Posterior vena cava (tissue), 2 donors: ENCODE measurements at regions of chr14 and their contacts with region 1.

Region 1: GRCh38 chr14:101767618-101768362 is 6.3 kb downstream of the PPP2R5C start:
- DNase-seq: no peak

Region 2: GRCh38 chr14:101825797-101826196 is 58.0 kb after region 1 on chr14:
- intact Hi-C with region 1: loop called in 1 of 2 experiments (anchors 1 kb)
- DNase-seq: no peak

Region 3: GRCh38 chr14:101889898-101890297 is 122.1 kb after region 1 on chr14:
- intact Hi-C with region 1: no loop called
- DNase-seq: no peak